ENCODE measurements at regions of chr17 and their contacts with region 1.

Region 1: DNA sequence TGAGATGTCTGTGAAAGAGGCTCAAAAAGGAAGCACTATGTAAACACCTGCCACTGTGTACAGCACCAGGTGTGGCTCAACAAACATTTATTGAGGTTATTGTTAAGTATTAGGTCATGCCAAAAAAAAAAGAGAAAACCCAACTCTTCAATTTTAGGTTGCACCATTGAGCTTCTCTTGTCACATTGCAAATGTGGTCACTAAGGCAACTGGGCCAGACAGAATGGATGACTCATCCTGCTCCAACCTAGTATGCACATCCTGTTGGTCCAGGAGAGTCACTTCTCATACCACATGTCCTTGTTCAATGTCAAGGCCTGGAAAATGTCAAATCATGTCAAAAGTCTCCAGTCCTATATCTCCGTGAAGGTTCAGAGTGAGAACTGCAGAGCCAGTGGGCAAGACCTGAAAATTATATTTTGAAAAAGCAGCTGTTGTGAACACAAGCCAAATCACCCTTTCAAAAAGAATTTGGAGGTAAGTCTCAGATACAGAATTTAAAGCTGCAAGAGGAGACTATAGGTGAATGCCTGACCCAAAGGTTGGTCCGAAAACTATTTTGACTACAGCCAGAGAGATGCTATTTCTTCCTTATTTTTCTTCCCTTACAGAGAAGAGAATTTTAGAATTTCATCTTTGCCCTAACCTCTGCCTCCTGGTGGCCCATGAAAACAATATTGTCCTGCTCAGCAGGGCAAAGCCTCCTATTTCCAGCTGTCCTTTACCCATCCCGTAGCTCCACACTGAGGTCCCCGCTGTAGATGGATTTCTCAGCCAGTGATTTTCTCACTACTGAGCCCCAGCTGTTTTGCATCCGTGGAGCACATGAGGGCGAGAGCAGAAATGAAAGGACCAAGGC is 24.8 kb downstream of the HOXB1 start:
- DNase-seq: peak; percentile 91
- H3K4me3 Mint-ChIP-seq: peak overlapping the region; percentile 62
- H3K27ac Mint-ChIP-seq: peak overlapping the region; percentile 84
- H3K4me1 Mint-ChIP-seq: peaks cover 40% of the 10 kb centered on the region
- H3K27me3 Mint-ChIP-seq: peaks cover 11% of the 10 kb centered on the region

Region 2: GRCh38 chr17:48492401-48493298 is 13.4 kb before region 1 on chr17:
- intact Hi-C with region 1: loop called (anchors 1 kb)
- DNase-seq: peak; percentile 92
- H3K4me3 Mint-ChIP-seq: peak overlapping the region; percentile 69
- H3K27ac Mint-ChIP-seq: peak overlapping the region; percentile 88
- H3K4me1 Mint-ChIP-seq: peaks cover 36% of the 10 kb centered on the region
- H3K27me3 Mint-ChIP-seq: peaks cover 22% of the 10 kb centered on the region

Region 3: GRCh38 chr17:48577946-48578615 is 72.1 kb after region 1 on chr17 and contains the start of gene HOXB4:
- intact Hi-C with region 1: no loop called
- DNase-seq: peak; percentile 93
- H3K4me3 Mint-ChIP-seq: peak within 1 kb of the TSS; percentile 92
- H3K27ac Mint-ChIP-seq: peak within 1 kb of the TSS; percentile 86
- H3K4me1 Mint-ChIP-seq: peaks cover 60% of the 10 kb centered on the region
- H3K27me3 Mint-ChIP-seq: peaks cover 38% of the 10 kb centered on the region
- total RNA-seq, gene HOXB4: 3.1 and 3.6 TPM in 2 replicates